Common myeloid progenitor, CD34-positive (primary cell): ENCODE measurements at regions of chr7 and their contacts with region 1.

Region 1: DNA sequence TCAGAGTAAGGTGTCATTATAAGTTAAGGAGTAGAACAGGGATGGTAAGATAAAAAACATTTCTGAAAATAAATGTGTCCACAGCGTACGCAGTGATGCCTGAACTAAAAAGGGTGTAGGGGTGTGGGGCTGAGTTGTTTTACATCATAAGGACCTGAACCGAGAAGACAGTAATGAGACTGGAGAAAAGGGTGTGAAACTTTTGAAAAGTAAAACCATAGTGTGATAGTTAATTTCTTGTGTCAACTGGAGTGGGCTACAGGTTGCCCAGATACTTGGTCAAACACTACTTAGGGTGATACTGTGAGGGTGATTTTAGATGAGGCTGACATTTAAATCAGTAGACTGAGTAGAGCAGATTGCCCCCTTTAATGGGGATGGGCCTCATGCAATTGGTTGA is 169.0 kb upstream of the PRPS1L1 start:
- DNase-seq: no peak
- H3K4me3 ChIP-seq: no peak overlapping the region
- H3K27ac ChIP-seq: no peak overlapping the region
- H3K4me1 ChIP-seq: peaks cover 0 to 4% (median 2%) of the 10 kb centered on the region in 4 experiments
- H3K27me3 ChIP-seq: no peaks in the 10 kb centered on the region

Region 2: DNA sequence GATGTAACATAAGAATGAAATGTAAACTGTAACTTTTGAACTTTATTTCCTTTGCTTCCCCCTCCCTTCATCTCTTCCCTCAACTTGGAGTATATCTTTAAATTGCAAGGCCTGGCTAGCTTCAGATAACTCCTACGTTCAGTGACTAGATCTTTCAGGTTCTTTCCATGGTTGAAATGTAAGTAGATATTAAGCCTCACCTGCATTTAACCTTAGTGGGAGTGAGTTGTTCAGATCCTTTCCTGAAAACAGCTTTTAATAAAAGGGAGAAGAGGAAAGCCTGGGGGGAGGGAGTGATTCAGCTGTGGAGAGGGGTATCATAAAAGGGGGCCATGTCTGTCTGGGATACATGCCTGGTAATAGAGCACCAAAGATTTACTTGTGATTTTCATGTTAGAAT is 150.0 kb before region 1 on chr7:
- CTCF ChIA-PET with region 1: no interaction called
- POLR2A ChIA-PET with region 1: no interaction called
- DNase-seq: no peak
- H3K4me3 ChIP-seq: no peak overlapping the region
- H3K27ac ChIP-seq: no peak overlapping the region
- H3K4me1 ChIP-seq: no peaks in the 10 kb centered on the region
- H3K27me3 ChIP-seq: no peaks in the 10 kb centered on the region

Region 3: GRCh38 chr7:18213652-18214051 is 17.0 kb after region 1 on chr7:
- CTCF ChIA-PET with region 1: interaction called, 14 read pairs
- POLR2A ChIA-PET with region 1: no interaction called
- DNase-seq: no peak
- H3K4me3 ChIP-seq: no peak overlapping the region
- H3K27ac ChIP-seq: no peak overlapping the region
- H3K4me1 ChIP-seq: no peaks in the 10 kb centered on the region
- H3K27me3 ChIP-seq: no peaks in the 10 kb centered on the region